Naive thymus-derived CD4-positive, alpha-beta T cell (primary cell): ENCODE measurements at regions of chr4 and their contacts with region 1.

Region 1: DNA sequence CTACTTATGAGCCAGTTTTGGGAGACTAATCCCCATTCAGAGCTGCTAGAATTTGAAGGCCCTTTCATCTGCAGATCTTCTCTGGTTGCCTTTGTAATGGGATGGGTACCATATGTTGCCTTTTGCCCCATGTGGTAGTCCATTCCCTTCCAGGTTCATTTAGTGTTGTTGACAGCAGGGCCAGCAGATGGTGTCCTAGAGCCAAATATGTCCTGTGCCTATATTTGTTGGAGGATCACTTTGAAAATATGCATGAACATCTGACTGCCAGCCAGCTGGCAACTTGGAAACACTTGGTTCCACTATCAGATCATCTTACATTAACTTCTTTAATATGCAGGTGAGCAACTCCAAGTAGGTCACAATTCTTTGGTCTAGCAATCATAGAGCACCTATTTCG is 30.4 kb downstream of the CFAP299 start:
- DNase-seq: peak in 8 of 9 donors; percentile 18 to 72 (median 62)
- ATAC-seq: peak; percentile 79
- H3K4me3 ChIP-seq: no peak overlapping the region
- H3K4me3 Mint-ChIP-seq: no peak overlapping the region
- H3K27ac ChIP-seq: no peak overlapping the region
- H3K27ac Mint-ChIP-seq: peak overlapping the region in 2 of 9 donors; percentile 32 to 52
- H3K4me1 ChIP-seq: peaks cover 0 to 4% of the 10 kb centered on the region in 2 donors
- H3K4me1 Mint-ChIP-seq: peaks cover 0 to 21% (median 8%) of the 10 kb centered on the region in 7 donors
- H3K27me3 ChIP-seq: no peaks in the 10 kb centered on the region
- H3K27me3 Mint-ChIP-seq: peaks cover 0 to 5% (median 0%) of the 10 kb centered on the region in 5 donors

Region 2: GRCh38 chr4:78951862-78952472 is 1414.0 kb before region 1 on chr4:
- CTCF ChIA-PET with region 1: no interaction called
- POLR2A ChIA-PET with region 1: no interaction called
- intact Hi-C with region 1: loop called (anchors 2 to 5 kb)
- DNase-seq: peak in 6 of 9 donors; percentile 19 to 43 (median 38)
- ATAC-seq: peak; percentile 85
- H3K4me3 ChIP-seq: no peak overlapping the region
- H3K4me3 Mint-ChIP-seq: no peak overlapping the region
- H3K27ac ChIP-seq: no peak overlapping the region
- H3K27ac Mint-ChIP-seq: no peak overlapping the region
- H3K4me1 ChIP-seq: no peaks in the 10 kb centered on the region
- H3K4me1 Mint-ChIP-seq: no peaks in the 10 kb centered on the region
- H3K27me3 ChIP-seq: no peaks in the 10 kb centered on the region
- H3K27me3 Mint-ChIP-seq: peaks cover 0 to 36% (median 22%) of the 10 kb centered on the region in 5 donors

Region 3: DNA sequence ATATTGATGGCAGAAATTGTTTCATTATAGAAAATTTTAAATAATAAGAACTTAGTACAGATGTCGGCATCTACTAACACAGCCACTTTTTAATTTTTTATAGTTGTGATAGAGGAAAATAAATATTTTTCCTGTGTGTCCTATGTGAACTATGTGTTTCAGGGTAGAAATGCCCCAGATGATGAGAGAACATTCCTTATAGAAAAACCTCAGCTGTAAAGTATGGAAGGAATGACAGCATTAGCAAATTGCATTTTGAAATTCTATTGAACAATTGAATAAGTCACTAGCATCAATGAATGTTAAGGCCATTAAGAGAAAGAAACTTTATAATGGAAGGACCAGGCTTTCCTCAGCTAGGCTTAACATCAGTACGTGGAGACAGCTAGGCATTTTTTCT is 118.8 kb after region 1 on chr4:
- CTCF ChIA-PET with region 1: no interaction called
- POLR2A ChIA-PET with region 1: no interaction called
- intact Hi-C with region 1: no loop called
- DNase-seq: no peak
- ATAC-seq: no peak
- H3K4me3 ChIP-seq: no peak overlapping the region
- H3K4me3 Mint-ChIP-seq: no peak overlapping the region
- H3K27ac ChIP-seq: no peak overlapping the region
- H3K27ac Mint-ChIP-seq: no peak overlapping the region
- H3K4me1 ChIP-seq: peaks cover 0 to under 1% of the 10 kb centered on the region in 2 donors
- H3K4me1 Mint-ChIP-seq: peaks cover 0 to 17% (median 8%) of the 10 kb centered on the region in 7 donors
- H3K27me3 ChIP-seq: no peaks in the 10 kb centered on the region
- H3K27me3 Mint-ChIP-seq: peaks cover 0 to 2% (median 0%) of the 10 kb centered on the region in 5 donors

Region 4: GRCh38 chr4:80592950-80593349 is 227.0 kb after region 1 on chr4:
- CTCF ChIA-PET with region 1: no interaction called
- POLR2A ChIA-PET with region 1: no interaction called
- intact Hi-C with region 1: loop called in 1 of 2 experiments (anchors 5 kb)
- DNase-seq: peak in 1 of 9 donors; percentile 4
- ATAC-seq: no peak
- H3K4me3 ChIP-seq: no peak overlapping the region
- H3K4me3 Mint-ChIP-seq: no peak overlapping the region
- H3K27ac ChIP-seq: no peak overlapping the region
- H3K27ac Mint-ChIP-seq: no peak overlapping the region
- H3K4me1 ChIP-seq: no peaks in the 10 kb centered on the region
- H3K4me1 Mint-ChIP-seq: peaks cover 0 to 15% (median 2%) of the 10 kb centered on the region in 7 donors
- H3K27me3 ChIP-seq: no peaks in the 10 kb centered on the region
- H3K27me3 Mint-ChIP-seq: no peaks in the 10 kb centered on the region

Region 5: GRCh38 chr4:80726471-80726870 is 360.5 kb after region 1 on chr4:
- CTCF ChIA-PET with region 1: no interaction called
- POLR2A ChIA-PET with region 1: no interaction called
- intact Hi-C with region 1: loop called in 1 of 2 experiments (anchors 10 kb)
- DNase-seq: no peak
- ATAC-seq: no peak
- H3K4me3 ChIP-seq: no peak overlapping the region
- H3K4me3 Mint-ChIP-seq: no peak overlapping the region
- H3K27ac ChIP-seq: no peak overlapping the region
- H3K27ac Mint-ChIP-seq: no peak overlapping the region
- H3K4me1 ChIP-seq: no peaks in the 10 kb centered on the region
- H3K4me1 Mint-ChIP-seq: no peaks in the 10 kb centered on the region
- H3K27me3 ChIP-seq: no peaks in the 10 kb centered on the region
- H3K27me3 Mint-ChIP-seq: no peaks in the 10 kb centered on the region

Region 6: DNA sequence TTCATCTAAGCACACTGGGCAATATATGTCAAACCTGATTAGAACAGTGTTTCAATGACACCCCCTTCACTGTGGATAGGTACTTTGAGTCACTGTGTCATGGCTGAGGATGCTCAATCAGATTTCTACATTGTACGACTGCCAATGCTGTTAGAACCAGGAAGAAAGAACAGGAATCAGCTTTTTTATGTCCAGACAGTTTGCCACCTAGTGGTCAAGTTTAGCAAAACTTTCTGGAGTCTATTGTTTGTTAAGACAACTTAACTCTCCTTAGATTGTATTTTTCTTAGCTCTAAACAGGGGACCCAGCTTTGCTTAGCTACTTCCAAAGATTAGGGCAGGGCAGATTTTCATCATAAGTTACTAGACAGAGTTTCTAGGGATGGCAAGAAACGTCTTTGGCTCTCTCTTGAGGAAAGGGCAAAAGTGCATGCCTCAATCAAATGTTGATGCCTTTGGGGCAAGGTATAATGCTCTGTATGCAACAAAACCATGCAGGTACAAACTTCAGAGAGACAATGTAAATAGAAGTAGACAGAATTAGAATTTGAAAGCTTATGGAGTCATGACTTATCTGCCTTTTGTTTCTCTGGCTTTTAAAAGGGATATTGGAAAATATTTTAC is 624.1 kb after region 1 on chr4:
- CTCF ChIA-PET with region 1: interaction called, 114 read pairs
- POLR2A ChIA-PET with region 1: interaction called, 3 read pairs
- intact Hi-C with region 1: loop called (anchors 1 kb)
- DNase-seq: peak in 7 of 9 donors; percentile 11 to 61 (median 58)
- ATAC-seq: peak; percentile 51
- H3K4me3 ChIP-seq: no peak overlapping the region
- H3K4me3 Mint-ChIP-seq: peak overlapping the region in 1 of 10 donors; percentile 30
- H3K27ac ChIP-seq: no peak overlapping the region
- H3K27ac Mint-ChIP-seq: no peak overlapping the region
- H3K4me1 ChIP-seq: no peaks in the 10 kb centered on the region
- H3K4me1 Mint-ChIP-seq: peaks cover 0 to 6% (median 0%) of the 10 kb centered on the region in 7 donors
- H3K27me3 ChIP-seq: no peaks in the 10 kb centered on the region
- H3K27me3 Mint-ChIP-seq: peaks cover 0 to 10% (median 4%) of the 10 kb centered on the region in 5 donors

Region 7: DNA sequence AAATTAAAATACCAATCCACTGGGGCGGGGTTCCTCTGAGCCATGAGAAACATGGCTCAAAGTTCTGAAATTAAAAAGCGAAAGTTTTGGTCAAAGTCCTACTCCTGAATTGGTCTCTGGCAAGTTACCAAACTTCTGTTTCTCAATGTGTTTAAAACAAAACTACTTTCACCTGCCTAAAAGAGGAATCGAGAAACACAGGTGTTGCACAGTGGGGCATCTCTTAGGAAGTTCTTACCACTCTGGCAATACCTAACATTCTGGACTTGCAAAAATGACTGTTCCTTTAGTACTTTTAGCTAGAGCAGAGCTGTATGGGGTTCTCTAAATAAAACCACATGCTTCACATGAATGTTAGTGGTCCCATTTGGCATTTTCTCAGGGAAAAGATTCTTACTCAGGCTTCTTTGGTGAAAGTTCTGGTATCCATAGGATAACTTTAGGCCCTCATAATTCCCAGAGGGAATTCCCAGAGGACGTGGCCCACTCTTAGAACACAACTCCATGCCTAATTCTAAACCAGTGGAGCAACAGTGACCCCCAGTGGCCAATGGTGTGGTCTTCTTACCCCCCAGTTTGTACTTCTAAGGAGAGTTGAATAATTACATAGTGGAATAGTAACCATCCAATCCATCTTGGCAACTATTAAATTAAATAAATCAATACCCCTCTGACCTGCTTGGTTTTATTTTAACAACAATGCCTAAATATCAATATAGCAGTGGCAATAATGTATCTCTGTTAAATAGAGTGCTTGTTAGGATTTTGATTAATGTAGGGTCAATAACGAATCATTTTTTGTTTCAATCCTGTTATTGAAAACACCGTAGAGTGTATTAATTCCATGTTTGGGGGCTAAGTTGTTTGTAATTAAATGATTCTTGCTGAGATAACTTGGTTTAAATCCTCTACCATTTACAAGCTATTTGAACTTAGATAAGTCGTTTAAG is 686.5 kb after region 1 on chr4:
- CTCF ChIA-PET with region 1: interaction called, 4 read pairs
- POLR2A ChIA-PET with region 1: no interaction called
- intact Hi-C with region 1: loop called (anchors 1 kb)
- DNase-seq: peak in 7 of 9 donors; percentile 11 to 52 (median 26)
- ATAC-seq: peak; percentile 54
- H3K4me3 ChIP-seq: no peak overlapping the region
- H3K4me3 Mint-ChIP-seq: no peak overlapping the region
- H3K27ac ChIP-seq: no peak overlapping the region
- H3K27ac Mint-ChIP-seq: no peak overlapping the region
- H3K4me1 ChIP-seq: no peaks in the 10 kb centered on the region
- H3K4me1 Mint-ChIP-seq: no peaks in the 10 kb centered on the region
- H3K27me3 ChIP-seq: peaks cover 0 to 1% of the 10 kb centered on the region in 2 donors
- H3K27me3 Mint-ChIP-seq: peaks cover 0 to 16% (median 11%) of the 10 kb centered on the region in 5 donors